ENCODE measurements at regions of chr1 and their contacts with region 1.

Region 1: DNA sequence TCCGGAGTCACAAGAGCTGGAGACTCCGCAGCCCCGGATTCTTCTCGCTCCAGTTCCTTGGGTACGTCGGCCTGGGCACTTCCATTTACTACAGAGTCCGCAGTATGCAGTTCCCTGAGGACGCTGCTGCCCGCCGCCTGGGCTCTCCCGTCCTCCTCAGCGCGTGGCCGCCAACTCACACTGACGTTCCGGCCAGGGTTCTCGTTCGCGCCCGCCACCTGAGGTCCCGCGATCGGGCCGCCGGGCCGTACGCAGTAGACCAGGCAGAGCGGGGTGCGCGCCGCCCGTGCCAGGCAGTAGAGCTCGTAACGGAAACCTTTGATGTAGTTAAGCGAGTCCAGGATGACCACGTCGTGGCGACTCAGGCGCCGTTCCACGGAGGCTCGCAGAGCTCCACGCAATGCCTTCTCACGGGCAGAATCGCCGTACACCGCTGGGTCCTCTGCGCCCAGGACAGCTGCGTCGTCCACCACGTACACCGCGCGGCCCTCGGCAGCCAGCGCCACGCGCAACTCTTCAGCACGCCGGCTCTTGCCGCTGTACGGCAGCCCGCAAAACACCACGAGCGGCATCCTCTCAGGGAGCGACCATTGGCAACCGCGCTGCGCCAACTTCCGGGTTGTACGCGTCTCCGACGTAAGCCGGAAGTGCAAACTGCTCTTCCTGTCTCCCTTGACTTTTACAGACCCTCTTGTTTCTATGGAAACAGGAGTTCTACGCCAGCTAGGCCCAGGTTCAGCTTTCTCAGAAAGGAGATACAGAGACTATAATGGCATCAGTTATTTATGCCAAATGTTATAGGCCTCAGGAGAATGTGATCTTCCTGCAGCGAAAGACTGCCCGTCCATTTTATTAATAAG is at the start of gene KTI12:
- DNase-seq: peak; percentile 87
- ATAC-seq: peak; percentile 92
- H3K4me3 Mint-ChIP-seq: peak within 1 kb of the TSS; percentile 90
- H3K27ac Mint-ChIP-seq: peak within 1 kb of the TSS; percentile 93
- H3K4me1 Mint-ChIP-seq: peaks cover 33% of the 10 kb centered on the region
- H3K27me3 Mint-ChIP-seq: no peaks in the 10 kb centered on the region
- total RNA-seq, gene KTI12: 12.5 to 14.6 TPM

Region 2: DNA sequence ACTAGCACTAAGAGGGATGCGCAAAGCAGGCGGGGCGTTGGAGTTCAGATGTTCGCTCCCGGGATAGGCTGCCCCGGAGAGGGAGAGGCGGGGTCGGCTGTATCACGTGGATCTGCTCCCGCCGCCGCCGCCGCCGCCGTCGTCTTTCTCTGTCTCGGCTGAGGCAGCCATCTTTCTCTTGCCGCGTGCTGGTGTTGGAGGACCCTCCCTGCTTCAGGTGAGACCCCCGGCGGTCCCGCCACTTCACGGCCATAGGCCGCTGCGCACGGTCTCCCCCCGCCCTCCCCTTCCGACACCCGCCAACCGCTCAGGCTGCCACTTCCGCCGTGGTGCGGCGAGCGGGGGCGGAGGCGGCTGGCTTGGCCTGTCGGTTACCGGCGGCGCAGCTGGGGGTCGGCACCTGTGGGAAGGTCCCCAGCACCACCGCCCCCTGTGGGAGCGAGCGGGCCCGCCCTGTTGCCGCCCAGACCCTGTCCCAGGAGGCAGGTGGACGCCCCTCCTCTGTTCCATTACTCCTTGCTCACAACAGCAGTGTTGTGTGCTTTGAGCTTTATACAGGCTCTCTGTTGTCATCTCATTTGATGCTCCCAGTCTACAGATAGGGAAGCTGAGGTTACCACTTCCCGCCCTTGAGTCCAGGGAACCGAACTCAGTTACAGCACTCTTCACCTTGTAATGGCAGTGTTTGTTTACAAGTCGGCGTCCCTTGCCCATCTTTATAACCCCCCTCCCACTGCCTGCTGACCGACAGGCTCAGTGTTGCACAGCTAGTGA is 22.9 kb after region 1 on chr1 and contains the start of gene BTF3L4:
- POLR2A ChIA-PET with region 1: interaction called, 27 read pairs
- DNase-seq: peak; percentile 89
- ATAC-seq: peak; percentile 95
- H3K4me3 Mint-ChIP-seq: peak within 1 kb of the TSS; percentile 99
- H3K27ac Mint-ChIP-seq: peak within 1 kb of the TSS; percentile 97
- H3K4me1 Mint-ChIP-seq: peaks cover 39% of the 10 kb centered on the region
- H3K27me3 Mint-ChIP-seq: no peaks in the 10 kb centered on the region
- total RNA-seq, gene BTF3L4: 31.4 to 41.0 TPM

Region 3: DNA sequence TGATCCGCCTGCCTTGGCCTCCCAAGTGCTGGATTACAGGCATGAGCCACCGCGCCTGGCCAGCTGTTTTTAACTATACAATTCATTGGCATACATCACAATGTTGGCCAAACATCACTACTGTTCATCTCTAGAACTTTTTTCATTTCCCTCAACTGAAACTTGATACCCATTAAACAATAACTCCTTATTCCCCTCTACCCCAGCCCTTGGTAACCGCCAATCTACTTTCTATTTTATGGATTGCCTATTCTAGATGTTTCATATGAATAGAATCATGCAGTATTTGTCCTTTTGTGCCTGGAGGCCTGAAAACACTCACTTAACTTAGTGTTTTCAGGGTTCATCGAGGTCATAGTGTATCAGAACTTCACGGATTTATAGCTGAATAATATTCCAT is 38.9 kb after region 1 on chr1:
- POLR2A ChIA-PET with region 1: no interaction called
- DNase-seq: no peak
- ATAC-seq: no peak
- H3K4me3 Mint-ChIP-seq: no peak overlapping the region
- H3K27ac Mint-ChIP-seq: no peak overlapping the region
- H3K4me1 Mint-ChIP-seq: peaks cover 10% of the 10 kb centered on the region
- H3K27me3 Mint-ChIP-seq: no peaks in the 10 kb centered on the region

Region 4: GRCh38 chr1:52662645-52663313 is 629.4 kb after region 1 on chr1:
- POLR2A ChIA-PET with region 1: no interaction called
- DNase-seq: no peak
- ATAC-seq: no peak
- H3K4me3 Mint-ChIP-seq: no peak overlapping the region
- H3K27ac Mint-ChIP-seq: no peak overlapping the region
- H3K4me1 Mint-ChIP-seq: peaks cover 14% of the 10 kb centered on the region
- H3K27me3 Mint-ChIP-seq: no peaks in the 10 kb centered on the region

Measured in activated naive CD8-positive, alpha-beta T cell treated with anti-CD3 and anti-CD28 coated beads, Interleukin-2, amount 10 ng/mL, durations not matched to agents 7 days and 5 days (primary cell).